GM10248 (cell line): ENCODE measurements at regions of chr2 and their contacts with region 1.

Region 1: GRCh38 chr2:38377050-38377828 is at the start of gene ATL2:
- DNase-seq: peak; percentile 92
- CTCF ChIP-seq: no peak

Region 2: DNA sequence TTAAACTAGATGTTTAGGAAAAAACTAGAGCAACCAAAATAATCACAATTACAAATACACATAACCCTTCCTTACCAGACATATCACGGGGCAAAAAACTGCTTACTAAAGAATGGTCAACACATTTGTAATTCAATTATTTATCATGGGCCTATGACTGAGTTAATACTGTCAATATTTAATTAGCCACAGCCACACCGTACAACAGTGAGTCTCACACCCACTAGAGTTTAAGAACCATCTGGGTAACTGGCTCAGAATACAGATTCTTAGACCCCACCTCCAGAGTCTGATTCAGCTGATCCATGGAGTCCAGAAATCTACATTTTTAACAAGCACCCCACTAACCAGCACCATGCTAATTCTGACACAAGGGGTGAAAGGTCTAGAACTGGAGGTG is 15.0 kb before region 1 on chr2:
- CTCF ChIA-PET with region 1: interaction called, 32 read pairs
- POLR2A ChIA-PET with region 1: no interaction called
- DNase-seq: no peak
- CTCF ChIP-seq: no peak